Activated CD4-positive, alpha-beta T cell treated with anti-CD3 and anti-CD28 coated beads for 36 hours (primary cell): ENCODE measurements at regions of chr11 and their contacts with region 1.

Region 1: DNA sequence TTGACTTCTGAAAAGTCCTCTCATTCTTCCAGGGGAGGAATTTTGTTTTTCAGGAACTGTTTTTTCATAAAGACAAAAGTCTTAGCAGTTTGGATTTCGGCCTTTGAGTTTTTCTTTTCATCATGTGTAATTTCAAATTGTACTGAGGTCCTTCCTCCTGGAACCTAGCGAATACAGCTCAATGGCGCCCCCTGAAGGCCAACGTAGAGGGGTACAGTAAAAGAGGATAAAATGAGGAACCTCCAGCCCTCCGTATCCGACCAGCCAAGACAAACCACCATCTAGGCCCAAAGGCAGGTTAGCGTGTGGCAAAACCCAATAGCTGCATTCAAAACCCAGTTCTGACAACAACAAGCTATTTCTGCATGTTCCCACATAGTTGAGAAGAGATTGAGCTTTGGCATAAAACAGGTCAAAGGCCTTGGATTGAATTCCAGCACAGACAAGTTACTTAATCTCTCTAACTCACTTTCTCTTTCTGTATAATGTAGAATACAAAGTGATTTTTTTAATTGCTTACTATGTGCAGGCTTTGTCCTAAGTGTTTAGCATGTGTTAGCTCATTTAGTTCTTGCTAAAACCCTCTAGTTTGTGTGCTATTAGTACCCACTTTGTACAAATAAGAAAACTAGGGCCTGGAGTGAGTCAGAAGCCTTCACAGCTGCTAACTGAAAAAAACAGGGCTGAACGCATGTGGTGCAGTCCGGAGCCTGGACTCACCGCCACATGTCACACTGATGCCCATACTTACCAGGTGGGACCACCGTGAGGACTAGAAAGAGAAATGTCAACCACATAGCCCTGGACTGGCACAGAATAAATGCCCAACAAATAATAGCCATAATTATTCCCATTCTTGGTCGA is 43.2 kb upstream of the ETS1 start:
- DNase-seq: peak; percentile 97
- ATAC-seq: peak; percentile 73
- H3K4me3 Mint-ChIP-seq: peak overlapping the region; percentile 57
- H3K27ac Mint-ChIP-seq: peak overlapping the region; percentile 88
- H3K4me1 Mint-ChIP-seq: peaks cover 66% of the 10 kb centered on the region
- H3K27me3 Mint-ChIP-seq: no peaks in the 10 kb centered on the region

Region 2: GRCh38 chr11:128039140-128040021 is 591.2 kb before region 1 on chr11:
- CTCF ChIA-PET with region 1: interaction called, 4 read pairs
- POLR2A ChIA-PET with region 1: no interaction called
- intact Hi-C with region 1: loop called (anchors 2 to 5 kb)
- DNase-seq: peak; percentile 88
- ATAC-seq: peak; percentile 94
- H3K4me3 Mint-ChIP-seq: peak overlapping the region; percentile 31
- H3K27ac Mint-ChIP-seq: peak overlapping the region; percentile 85
- H3K4me1 Mint-ChIP-seq: peaks cover 39% of the 10 kb centered on the region
- H3K27me3 Mint-ChIP-seq: no peaks in the 10 kb centered on the region

Region 3: GRCh38 chr11:128290106-128290840 is 340.3 kb before region 1 on chr11:
- CTCF ChIA-PET with region 1: interaction called, 11 read pairs
- POLR2A ChIA-PET with region 1: interaction called, 4 read pairs
- intact Hi-C with region 1: loop called (anchors 1 kb)
- DNase-seq: peak; percentile 80
- ATAC-seq: peak; percentile 54
- H3K4me3 Mint-ChIP-seq: peak overlapping the region; percentile 78
- H3K27ac Mint-ChIP-seq: peak overlapping the region; percentile 98
- H3K4me1 Mint-ChIP-seq: peaks cover 98% of the 10 kb centered on the region
- H3K27me3 Mint-ChIP-seq: no peaks in the 10 kb centered on the region

Region 4: DNA sequence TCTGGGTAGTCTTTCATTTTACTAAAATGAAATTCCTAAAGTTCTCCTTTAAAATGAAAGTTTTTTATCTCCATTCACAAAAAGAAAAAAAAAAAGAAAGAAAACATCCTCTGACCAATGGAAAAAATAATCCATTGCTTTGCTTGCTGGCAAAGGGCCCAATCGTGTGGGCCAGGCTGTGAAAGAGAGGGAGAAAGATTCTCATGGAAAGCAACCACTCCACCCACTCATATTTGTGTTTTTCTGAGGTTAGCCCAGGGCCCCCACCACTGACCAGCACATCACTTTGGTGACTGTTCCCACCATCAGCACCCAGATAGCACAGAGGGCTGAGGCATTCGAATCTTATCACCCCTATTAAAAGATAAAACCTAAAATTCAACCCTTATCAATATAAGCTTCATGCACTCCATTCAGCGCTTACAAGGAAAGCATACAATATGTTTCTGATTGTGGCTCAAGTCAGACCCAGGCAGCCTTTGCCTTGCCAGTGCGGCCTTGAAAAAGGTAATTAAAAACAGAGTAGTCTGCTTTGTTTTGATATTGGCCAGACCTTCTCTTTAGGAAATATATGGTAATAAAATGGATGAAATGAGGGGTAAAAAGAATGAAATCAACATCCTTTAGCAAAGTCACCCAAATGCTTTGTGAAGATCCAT is 236.0 kb before region 1 on chr11:
- CTCF ChIA-PET with region 1: no interaction called
- POLR2A ChIA-PET with region 1: no interaction called
- intact Hi-C with region 1: no loop called
- DNase-seq: no peak
- ATAC-seq: no peak
- H3K4me3 Mint-ChIP-seq: no peak overlapping the region
- H3K27ac Mint-ChIP-seq: no peak overlapping the region
- H3K4me1 Mint-ChIP-seq: peaks cover 33% of the 10 kb centered on the region
- H3K27me3 Mint-ChIP-seq: no peaks in the 10 kb centered on the region

Region 5: DNA sequence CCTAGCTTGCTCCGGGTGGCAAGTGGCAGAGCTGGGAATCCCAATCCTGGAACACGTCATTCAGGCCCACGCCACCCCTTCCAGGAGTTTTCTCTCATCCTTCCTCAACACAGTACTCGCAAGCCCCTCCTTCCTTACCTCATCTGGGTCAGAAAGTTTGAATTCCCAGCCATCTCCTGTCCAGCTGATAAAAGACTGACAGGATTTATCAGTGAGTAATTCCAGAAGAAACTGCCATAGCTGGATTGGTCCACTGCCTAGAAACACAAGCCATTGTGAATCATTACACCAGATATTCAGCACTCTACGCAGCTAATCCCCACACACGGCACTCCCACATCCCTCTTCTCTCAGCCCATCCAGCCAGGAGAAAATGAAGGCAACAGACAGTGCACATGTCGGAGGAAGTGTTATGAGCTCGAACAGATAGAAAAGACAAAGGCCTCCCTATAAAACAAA is 167.2 kb before region 1 on chr11:
- CTCF ChIA-PET with region 1: interaction called, 86 read pairs
- POLR2A ChIA-PET with region 1: interaction called, 3 read pairs
- intact Hi-C with region 1: no loop called
- DNase-seq: no peak
- ATAC-seq: no peak
- H3K4me3 Mint-ChIP-seq: peak overlapping the region; percentile 26
- H3K27ac Mint-ChIP-seq: peak overlapping the region; percentile 99
- H3K4me1 Mint-ChIP-seq: peaks cover 94% of the 10 kb centered on the region
- H3K27me3 Mint-ChIP-seq: no peaks in the 10 kb centered on the region

Region 6: GRCh38 chr11:128497061-128497775 is 133.4 kb before region 1 on chr11:
- CTCF ChIA-PET with region 1: interaction called, 65 read pairs
- POLR2A ChIA-PET with region 1: no interaction called
- intact Hi-C with region 1: loop called in 1 of 2 experiments (anchors 1 kb)
- DNase-seq: peak; percentile 52
- ATAC-seq: peak; percentile 8
- H3K4me3 Mint-ChIP-seq: peak overlapping the region; percentile 70
- H3K27ac Mint-ChIP-seq: peak overlapping the region; percentile 99
- H3K4me1 Mint-ChIP-seq: peaks cover 95% of the 10 kb centered on the region
- H3K27me3 Mint-ChIP-seq: no peaks in the 10 kb centered on the region

Region 7: GRCh38 chr11:128599729-128600128 is 30.9 kb before region 1 on chr11:
- CTCF ChIA-PET with region 1: interaction called, 10 read pairs
- POLR2A ChIA-PET with region 1: interaction called, 3 read pairs
- intact Hi-C with region 1: no loop called
- DNase-seq: no peak
- ATAC-seq: peak; percentile 63
- H3K4me3 Mint-ChIP-seq: no peak overlapping the region
- H3K27ac Mint-ChIP-seq: peak overlapping the region; percentile 59
- H3K4me1 Mint-ChIP-seq: peaks cover 65% of the 10 kb centered on the region
- H3K27me3 Mint-ChIP-seq: peaks cover 2% of the 10 kb centered on the region

Region 8: DNA sequence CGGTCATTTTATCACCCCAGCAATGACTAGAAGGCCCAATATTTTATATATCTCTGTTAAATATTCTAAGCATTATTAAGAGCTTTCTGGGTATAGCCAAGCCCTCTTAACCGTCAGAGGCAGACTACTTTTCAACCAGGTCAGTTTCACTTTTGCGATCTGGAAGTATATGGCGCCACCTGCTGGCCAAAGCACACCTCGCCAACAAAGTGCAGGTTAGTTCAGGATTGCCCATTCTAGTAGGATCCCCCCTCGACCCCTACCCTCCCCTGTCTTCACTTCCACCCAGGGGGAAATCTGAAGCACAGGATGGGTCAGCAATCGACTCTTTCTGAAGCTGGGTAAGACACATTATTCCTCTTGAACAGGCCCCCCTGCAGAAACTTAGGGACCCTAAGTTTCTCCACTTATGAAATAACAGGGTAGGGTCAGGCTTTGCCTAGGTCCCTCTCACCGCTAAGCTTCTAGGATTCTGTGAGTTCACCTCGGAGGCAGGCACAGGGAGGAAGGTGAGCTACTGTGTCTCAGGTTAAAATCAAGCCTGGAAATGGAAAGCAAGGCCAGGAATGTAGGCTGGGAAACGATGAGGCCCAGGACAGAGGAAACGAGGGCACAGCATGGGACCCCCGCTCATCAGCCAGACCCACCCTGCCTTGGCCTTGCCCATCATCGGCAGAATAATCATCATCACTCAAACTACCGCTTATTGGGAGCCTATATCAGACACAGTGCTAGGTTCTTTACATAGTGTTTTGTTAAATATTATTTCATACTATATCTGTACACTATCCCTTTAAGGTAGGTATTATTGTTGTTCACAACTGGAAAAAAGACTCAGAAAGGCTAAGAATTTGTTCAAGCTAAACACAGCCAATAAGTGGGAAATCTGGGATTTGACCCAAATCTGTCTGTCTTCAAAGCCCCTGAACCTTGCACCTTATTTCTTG is 200.8 kb after region 1 on chr11:
- CTCF ChIA-PET with region 1: interaction called, 51 read pairs
- POLR2A ChIA-PET with region 1: interaction called, 5 read pairs
- intact Hi-C with region 1: loop called (anchors 1 kb)
- DNase-seq: peak; percentile 93
- ATAC-seq: peak; percentile 81
- H3K4me3 Mint-ChIP-seq: peak overlapping the region; percentile 57
- H3K27ac Mint-ChIP-seq: peak overlapping the region; percentile 93
- H3K4me1 Mint-ChIP-seq: peaks cover 21% of the 10 kb centered on the region
- H3K27me3 Mint-ChIP-seq: no peaks in the 10 kb centered on the region

Region 9: GRCh38 chr11:130427581-130428315 is 1797.1 kb after region 1 on chr11:
- CTCF ChIA-PET with region 1: no interaction called
- POLR2A ChIA-PET with region 1: no interaction called
- intact Hi-C with region 1: no loop called
- DNase-seq: no peak
- ATAC-seq: no peak
- H3K4me3 Mint-ChIP-seq: no peak overlapping the region
- H3K27ac Mint-ChIP-seq: no peak overlapping the region
- H3K4me1 Mint-ChIP-seq: peaks cover 11% of the 10 kb centered on the region
- H3K27me3 Mint-ChIP-seq: peaks cover 49% of the 10 kb centered on the region